ENCODE measurements at regions of chr5 and their contacts with region 1.

Region 1: GRCh38 chr5:100939981-100940380 is 36.9 kb upstream of the ST8SIA4 start:
- DNase-seq: no peak
- ATAC-seq: no peak
- H3K4me3 Mint-ChIP-seq: no peak overlapping the region
- H3K27ac Mint-ChIP-seq: no peak overlapping the region
- H3K4me1 Mint-ChIP-seq: no peaks in the 10 kb centered on the region
- H3K27me3 Mint-ChIP-seq: no peaks in the 10 kb centered on the region
- CTCF ChIP-seq: no peak

Region 2: DNA sequence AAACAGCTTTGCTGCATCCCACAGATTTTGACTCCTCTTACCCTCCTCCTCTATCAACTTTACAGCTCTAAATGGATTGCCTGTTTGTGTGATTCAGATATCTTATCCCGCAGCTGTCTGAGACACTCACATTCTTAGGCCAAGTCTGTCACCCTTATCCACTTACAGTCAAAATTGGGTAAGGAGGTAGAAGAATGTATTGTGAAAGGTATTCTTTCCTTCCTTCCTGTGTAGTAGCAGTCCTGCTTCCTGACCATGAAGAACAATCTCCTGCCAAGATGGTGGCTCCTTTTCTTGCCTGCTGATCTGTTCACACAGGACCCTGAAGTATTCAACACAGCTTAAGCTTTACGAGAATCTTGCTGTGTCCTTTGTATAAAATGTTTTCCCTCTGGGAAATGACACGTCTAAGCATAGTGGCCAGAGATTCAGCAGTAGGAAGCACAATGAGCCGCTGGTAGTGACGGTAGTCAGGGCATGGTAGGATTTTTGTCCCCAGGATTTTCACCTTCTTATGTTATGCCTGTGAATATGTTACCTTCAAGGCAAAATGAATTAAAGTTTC is 30.8 kb after region 1 on chr5:
- CTCF ChIA-PET with region 1: no interaction called
- POLR2A ChIA-PET with region 1: no interaction called
- intact Hi-C with region 1: loop called (anchors 5 kb)
- DNase-seq: no peak
- ATAC-seq: no peak
- H3K4me3 Mint-ChIP-seq: no peak overlapping the region
- H3K27ac Mint-ChIP-seq: no peak overlapping the region
- H3K4me1 Mint-ChIP-seq: no peaks in the 10 kb centered on the region
- H3K27me3 Mint-ChIP-seq: peaks cover 13% of the 10 kb centered on the region
- CTCF ChIP-seq: no peak

Measured in activated B cell treated with CpG ODN at 0.5 μM for 24 hours (primary cell).